ENCODE measurements at regions of chr14 and their contacts with region 1.

Region 1: DNA sequence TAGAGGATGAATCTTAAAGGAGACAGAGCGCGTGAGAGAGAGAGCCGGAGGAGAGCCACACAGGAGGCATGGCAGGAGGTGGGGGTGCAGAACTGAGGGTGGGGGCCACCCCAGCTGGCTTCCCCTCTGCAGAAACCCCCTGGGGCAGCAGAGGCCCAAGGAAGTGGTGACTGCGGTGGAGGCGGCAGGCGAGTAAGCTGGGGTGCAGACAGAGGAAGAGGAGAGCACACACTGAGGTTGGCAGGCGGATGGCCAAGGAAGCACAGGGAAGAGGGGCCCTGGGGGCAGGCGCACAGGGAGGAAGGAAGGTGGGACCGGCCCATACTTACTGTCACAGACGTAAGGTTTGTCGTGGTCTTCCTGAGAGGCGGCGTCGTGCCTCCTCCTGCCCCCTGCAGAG is 179.8 kb downstream of the DPF3 start:
- DNase-seq: no peak
- H3K4me3 ChIP-seq: no peak overlapping the region
- H3K27ac ChIP-seq: peak overlapping the region in 1 of 2 donors; percentile 72
- H3K4me1 ChIP-seq: peaks cover 19 to 31% of the 10 kb centered on the region in 2 donors
- H3K27me3 ChIP-seq: no peaks in the 10 kb centered on the region
- CTCF ChIP-seq: no peak

Region 2: DNA sequence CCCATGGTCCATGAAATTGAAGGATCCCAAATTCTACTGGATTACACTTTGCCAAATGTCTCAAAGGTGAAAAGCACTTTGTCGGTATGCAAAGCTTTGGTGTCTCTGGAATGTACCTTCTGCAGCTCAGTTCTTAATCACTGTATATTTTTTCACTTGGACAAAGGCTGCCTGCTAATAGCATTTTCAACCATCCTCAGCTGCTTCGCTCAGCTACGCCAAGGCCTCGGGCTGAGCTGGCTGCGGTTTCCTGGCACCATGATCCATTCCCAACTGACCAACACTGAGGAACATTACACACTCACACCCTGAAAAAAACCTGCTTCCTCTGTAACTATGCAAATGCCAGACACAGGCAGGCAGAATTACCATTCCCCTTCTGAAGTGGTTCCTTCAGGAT is 155.4 kb before region 1 on chr14:
- intact Hi-C with region 1: loop called (anchors 5 kb)
- DNase-seq: no peak
- H3K4me3 ChIP-seq: no peak overlapping the region
- H3K27ac ChIP-seq: peak overlapping the region; percentile 55 to 75
- H3K4me1 ChIP-seq: peaks cover 3 to 23% of the 10 kb centered on the region in 2 donors
- H3K27me3 ChIP-seq: no peaks in the 10 kb centered on the region
- CTCF ChIP-seq: no peak

Region 3: DNA sequence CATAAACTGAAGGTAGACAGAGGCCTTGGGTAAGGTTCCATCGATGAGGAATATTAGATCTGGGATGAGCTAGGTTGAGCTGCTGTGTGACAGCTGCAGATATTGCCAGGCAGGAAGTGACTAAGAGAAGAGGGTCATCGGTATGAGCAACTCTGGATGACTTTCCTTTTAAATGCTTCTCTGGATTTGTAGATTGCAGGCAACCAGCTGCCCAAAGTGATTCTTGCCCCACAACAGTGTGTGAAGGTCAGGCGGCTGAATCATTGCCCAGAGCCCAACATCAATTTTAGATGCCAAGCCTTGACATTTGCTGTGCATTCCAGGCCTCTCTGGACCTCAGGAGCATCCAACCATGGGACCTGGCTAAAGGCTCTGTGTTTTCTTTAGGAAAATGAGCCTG is 76.1 kb before region 1 on chr14:
- intact Hi-C with region 1: no loop called
- DNase-seq: no peak
- H3K4me3 ChIP-seq: no peak overlapping the region
- H3K27ac ChIP-seq: no peak overlapping the region
- H3K4me1 ChIP-seq: peaks cover 0 to 2% of the 10 kb centered on the region in 2 donors
- H3K27me3 ChIP-seq: no peaks in the 10 kb centered on the region
- CTCF ChIP-seq: no peak

Measured in ascending aorta (tissue), 2 donors.